PC-9 (cell line): ENCODE measurements at regions of chr1 and their contacts with region 1.

Region 1: DNA sequence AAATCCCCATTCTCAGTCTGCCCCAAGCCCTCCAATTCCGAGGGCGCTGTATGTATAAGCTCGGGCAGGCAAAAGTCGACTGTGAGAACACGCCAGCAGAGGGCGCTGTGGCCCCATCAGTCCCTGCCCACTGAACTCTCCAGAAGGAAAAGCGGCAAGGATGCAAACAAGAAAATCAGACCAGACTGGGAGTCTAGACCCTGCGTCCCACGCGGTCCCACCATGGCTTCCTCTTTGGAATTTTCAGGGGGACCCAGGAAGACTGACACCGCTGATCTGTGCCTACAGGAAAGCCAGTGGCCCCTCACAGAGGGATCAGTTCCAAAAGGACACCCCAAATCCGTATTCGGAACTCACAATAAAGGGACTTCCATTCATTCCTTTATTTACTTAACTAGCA is 19.5 kb downstream of the TEX35 start:
- DNase-seq: peak; percentile 60 to 79
- H3K4me3 ChIP-seq: no peak overlapping the region
- H3K27ac ChIP-seq: no peak overlapping the region
- H3K4me1 ChIP-seq: peaks cover 56% of the 10 kb centered on the region
- H3K27me3 ChIP-seq: no peaks in the 10 kb centered on the region
- CTCF ChIP-seq: peak; percentile 95

Region 2: DNA sequence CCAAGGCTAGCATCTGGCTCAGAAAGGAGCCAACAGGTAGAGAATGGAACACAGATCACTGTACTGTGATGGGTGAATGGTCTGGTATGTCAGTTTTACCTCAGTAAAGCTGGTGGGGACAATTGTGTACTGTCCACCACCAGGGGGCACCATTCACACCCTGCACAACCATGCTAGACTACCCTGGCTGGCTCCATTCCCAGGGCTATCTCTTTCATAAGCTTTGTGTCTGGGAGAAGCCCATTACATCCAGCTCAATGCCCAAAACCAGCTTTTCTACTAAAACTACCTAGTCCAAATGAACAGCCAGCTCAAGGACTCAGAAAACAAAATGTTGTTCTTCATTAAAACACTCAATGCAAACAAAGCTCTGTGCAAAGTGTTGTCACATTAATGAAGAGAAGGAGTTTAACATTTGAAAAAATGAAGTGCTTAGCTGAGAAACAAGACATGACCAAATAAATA is 500.5 kb before region 1 on chr1:
- CTCF ChIA-PET with region 1: interaction called, 7 read pairs
- POLR2A ChIA-PET with region 1: no interaction called
- intact Hi-C with region 1: loop called (anchors 10 kb)
- DNase-seq: peak; percentile 86 to 87
- H3K4me3 ChIP-seq: no peak overlapping the region
- H3K27ac ChIP-seq: peak overlapping the region; percentile 46
- H3K4me1 ChIP-seq: peaks cover 20% of the 10 kb centered on the region
- H3K27me3 ChIP-seq: no peaks in the 10 kb centered on the region
- CTCF ChIP-seq: peak; percentile 91

Region 3: GRCh38 chr1:178310685-178311105 is 221.7 kb before region 1 on chr1:
- CTCF ChIA-PET with region 1: no interaction called
- POLR2A ChIA-PET with region 1: no interaction called
- intact Hi-C with region 1: loop called (anchors 2 kb)
- DNase-seq: peak; percentile 15 to 86
- H3K4me3 ChIP-seq: no peak overlapping the region
- H3K27ac ChIP-seq: no peak overlapping the region
- H3K4me1 ChIP-seq: peaks cover 34% of the 10 kb centered on the region
- H3K27me3 ChIP-seq: no peaks in the 10 kb centered on the region
- CTCF ChIP-seq: peak; percentile 88

Region 4: GRCh38 chr1:179002552-179003345 is 470.4 kb after region 1 on chr1:
- CTCF ChIA-PET with region 1: interaction called, 20 read pairs
- POLR2A ChIA-PET with region 1: no interaction called
- intact Hi-C with region 1: no loop called
- DNase-seq: peak in 1 of 2 experiments; percentile 62
- H3K4me3 ChIP-seq: peak overlapping the region; percentile 5; the same call in 1 of the 2 replicates
- H3K27ac ChIP-seq: no peak overlapping the region
- H3K4me1 ChIP-seq: peaks cover 11% of the 10 kb centered on the region
- H3K27me3 ChIP-seq: no peaks in the 10 kb centered on the region
- CTCF ChIP-seq: peak; percentile 97

Region 5: GRCh38 chr1:179190861-179191260 is 658.5 kb after region 1 on chr1:
- CTCF ChIA-PET with region 1: no interaction called
- POLR2A ChIA-PET with region 1: no interaction called
- intact Hi-C with region 1: loop called (anchors 10 kb)
- DNase-seq: no peak
- H3K4me3 ChIP-seq: no peak overlapping the region
- H3K27ac ChIP-seq: no peak overlapping the region
- H3K4me1 ChIP-seq: no peaks in the 10 kb centered on the region
- H3K27me3 ChIP-seq: no peaks in the 10 kb centered on the region
- CTCF ChIP-seq: no peak

Region 6: GRCh38 chr1:179365320-179366092 is 833.1 kb after region 1 on chr1 and contains the start of gene AXDND1:
- CTCF ChIA-PET with region 1: interaction called, 3 read pairs
- POLR2A ChIA-PET with region 1: no interaction called
- intact Hi-C with region 1: loop called (anchors 1 kb)
- DNase-seq: peak; percentile 69 to 76
- H3K4me3 ChIP-seq: peak within 1 kb of the TSS; percentile 80
- H3K27ac ChIP-seq: peak within 1 kb of the TSS; percentile 79
- H3K4me1 ChIP-seq: peaks cover 4% of the 10 kb centered on the region; the same call in 1 of the 2 replicates
- H3K27me3 ChIP-seq: no peaks in the 10 kb centered on the region
- CTCF ChIP-seq: peak; percentile 32; the same call in 1 of the 2 replicates
- total RNA-seq, gene AXDND1: 1.8 and 3.4 TPM in 2 replicates

Region 7: GRCh38 chr1:179809506-179810366 is 1277.3 kb after region 1 on chr1:
- CTCF ChIA-PET with region 1: no interaction called
- POLR2A ChIA-PET with region 1: no interaction called
- intact Hi-C with region 1: loop called (anchors 10 kb)
- DNase-seq: peak; percentile 46 to 53
- H3K4me3 ChIP-seq: no peak overlapping the region
- H3K27ac ChIP-seq: no peak overlapping the region
- H3K4me1 ChIP-seq: no peaks in the 10 kb centered on the region
- H3K27me3 ChIP-seq: peaks cover 46% of the 10 kb centered on the region
- CTCF ChIP-seq: peak; percentile 93